Adrenal gland (tissue), 19 donors: ENCODE measurements at regions of chr20 and their contacts with region 1.

Region 1: GRCh38 chr20:20083807-20084206 is 31.5 kb downstream of the CFAP61 start:
- DNase-seq: no peak
- H3K4me3 ChIP-seq: no peak overlapping the region
- H3K27ac ChIP-seq: no peak overlapping the region
- H3K4me1 ChIP-seq: no peaks in the 10 kb centered on the region
- H3K27me3 ChIP-seq: peaks cover 10% of the 10 kb centered on the region
- CTCF ChIP-seq: peak; percentile 25 to 64 (median 47)
- POLR2A ChIP-seq: no peak

Region 2: DNA sequence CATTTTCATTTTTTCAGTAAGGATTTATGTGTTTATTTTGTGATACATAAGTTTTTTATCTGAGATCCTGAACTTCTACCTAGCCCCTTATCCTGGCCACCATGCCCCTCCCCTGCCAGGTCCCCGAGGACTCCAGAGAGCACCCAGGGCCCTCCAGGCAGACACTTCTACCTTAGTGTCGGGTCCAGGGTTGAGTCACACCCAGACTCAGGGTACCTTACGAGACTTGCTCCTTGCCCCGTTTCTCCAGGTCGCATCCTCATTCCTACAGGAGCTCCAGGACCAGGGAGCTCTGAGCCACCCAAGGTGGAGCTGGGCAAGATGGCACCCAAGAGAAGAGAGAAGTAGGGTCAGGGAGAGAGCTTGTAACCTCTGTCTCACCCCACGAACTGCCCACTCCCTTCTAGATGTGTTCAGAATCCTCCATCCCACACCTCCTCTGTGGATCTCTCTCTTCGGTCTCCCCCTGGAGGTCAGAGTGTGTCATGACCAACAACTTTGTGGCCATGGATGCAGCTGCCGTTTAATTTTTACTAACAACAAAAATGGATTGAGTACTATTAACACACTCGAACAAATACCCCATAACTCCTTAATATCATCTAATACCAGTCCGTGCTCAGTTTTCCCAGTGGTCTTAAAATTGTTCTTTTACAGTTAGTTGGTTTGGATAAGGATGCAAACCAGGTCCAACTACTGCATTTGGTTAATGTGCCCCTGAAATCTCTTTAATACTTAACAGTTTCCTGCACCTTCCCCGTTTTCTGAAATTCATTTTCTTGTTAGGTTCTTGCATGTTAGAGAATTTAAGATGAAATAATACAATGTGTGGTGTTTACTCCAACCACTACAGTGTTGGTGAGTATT is 153.5 kb after region 1 on chr20:
- intact Hi-C with region 1: loop called (anchors 5 to 10 kb)
- DNase-seq: peak in 6 of 7 donors; percentile 20 to 56 (median 43)
- H3K4me3 ChIP-seq: no peak overlapping the region
- H3K27ac ChIP-seq: no peak overlapping the region
- H3K4me1 ChIP-seq: peaks cover 0 to 5% of the 10 kb centered on the region in 2 donors
- H3K27me3 ChIP-seq: no peaks in the 10 kb centered on the region
- CTCF ChIP-seq: peak; percentile 49 to 70 (median 67)
- POLR2A ChIP-seq: no peak